ENCODE measurements at regions of chr9 and their contacts with region 1.

Region 1: DNA sequence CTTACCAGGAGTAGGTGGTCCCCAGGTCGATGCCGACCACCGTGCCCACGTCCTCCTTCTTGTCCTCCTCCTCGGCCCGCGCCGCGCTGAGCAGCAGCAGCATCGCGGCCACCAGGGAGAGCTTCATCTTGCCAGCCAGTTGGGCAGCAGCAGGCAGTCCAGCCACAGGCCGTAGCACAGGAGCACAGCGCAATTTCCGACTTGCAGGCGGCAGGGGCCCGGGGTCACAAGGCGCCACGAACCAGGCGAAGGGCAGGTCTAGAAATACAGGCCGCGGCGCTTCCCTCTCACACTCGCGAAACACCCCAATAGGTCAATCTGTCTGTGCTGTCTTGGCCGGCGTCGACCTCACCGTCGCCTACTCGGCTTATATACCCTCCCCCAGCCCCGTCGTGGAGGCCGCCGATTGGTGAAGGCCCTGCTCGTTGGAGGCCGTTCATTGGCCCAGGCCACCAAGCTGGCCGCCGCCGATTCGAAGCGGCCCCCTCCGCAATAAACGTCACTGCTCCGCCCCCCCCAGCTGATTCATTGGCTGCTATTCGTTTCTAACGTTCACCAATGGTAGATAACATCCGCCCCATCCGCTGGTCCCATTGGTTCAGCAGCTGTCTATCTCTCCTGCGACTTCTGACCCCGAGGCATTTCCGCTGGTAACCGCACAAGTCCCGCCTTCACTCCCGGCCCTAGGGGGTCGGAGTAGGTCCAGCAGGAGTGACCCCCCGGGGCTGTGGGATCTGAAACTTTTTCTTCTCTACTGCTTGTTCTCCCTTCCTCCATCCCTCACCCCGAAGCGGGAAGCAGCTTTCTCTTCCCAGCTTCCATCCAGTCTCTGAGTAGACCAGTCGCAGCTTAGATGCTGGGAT is at the start of gene HSPA5:
- H3K4me3 ChIP-seq: peak within 1 kb of the TSS; percentile 66
- H3K27ac ChIP-seq: peak within 1 kb of the TSS; percentile 81
- H3K4me1 ChIP-seq: no peaks in the 10 kb centered on the region
- CTCF ChIP-seq: peak; percentile 74; the same call in 1 of the 2 replicates

Region 2: GRCh38 chr9:124771021-124771866 is 470.0 kb before region 1 on chr9 and contains the start of gene NR6A1:
- CTCF ChIA-PET with region 1: no interaction called
- POLR2A ChIA-PET with region 1: interaction called, 11 read pairs
- H3K4me3 ChIP-seq: peak within 1 kb of the TSS; percentile 96
- H3K27ac ChIP-seq: peak within 1 kb of the TSS; percentile 91
- H3K4me1 ChIP-seq: peaks cover 16% of the 10 kb centered on the region; the same call in 1 of the 2 replicates
- CTCF ChIP-seq: peak; percentile 51; the same call in 1 of the 2 replicates

Region 3: DNA sequence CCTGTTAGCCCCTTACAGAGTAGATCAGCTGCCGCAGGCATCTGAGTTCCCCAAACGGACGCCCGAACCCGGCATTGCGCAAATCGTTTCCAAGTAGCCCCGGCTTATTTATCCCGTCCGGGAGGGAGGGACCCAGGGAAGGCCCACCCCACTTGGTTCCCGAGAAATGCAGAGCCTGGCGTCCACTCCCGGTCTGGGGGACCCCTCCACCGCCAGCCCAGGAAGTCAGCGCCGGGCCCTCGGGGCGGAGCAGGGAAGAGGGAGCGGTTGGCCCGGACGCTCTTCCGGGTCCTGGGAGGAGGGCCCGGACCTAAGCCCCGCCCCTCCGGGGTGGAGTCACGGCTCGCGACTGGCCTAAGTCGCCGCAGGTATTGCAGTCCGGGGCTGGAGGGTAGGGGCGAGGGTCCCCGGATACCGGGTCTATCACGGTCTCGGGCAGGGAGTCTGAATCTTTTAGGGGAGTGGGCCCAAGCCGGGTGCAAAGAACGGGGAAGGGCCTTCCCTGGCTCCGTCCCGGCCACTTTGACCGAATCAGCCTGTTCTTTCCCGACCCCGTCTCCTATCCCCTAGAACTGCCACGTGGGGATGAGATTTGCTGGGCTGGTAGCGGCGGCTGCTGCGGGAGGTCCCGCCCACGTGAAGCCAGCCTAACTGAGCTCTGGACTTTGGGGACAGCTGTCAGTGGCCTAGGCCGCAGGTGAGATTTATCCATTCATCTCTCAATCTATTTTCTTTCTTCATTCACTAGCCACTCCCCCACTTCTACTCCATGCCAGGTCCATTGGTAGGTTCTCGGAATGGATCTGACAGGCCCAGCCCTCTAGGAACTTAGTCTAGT is 40.8 kb before region 1 on chr9 and contains the start of gene RABEPK:
- CTCF ChIA-PET with region 1: no interaction called
- POLR2A ChIA-PET with region 1: interaction called, 38 read pairs
- H3K4me3 ChIP-seq: peak within 1 kb of the TSS; percentile 86
- H3K27ac ChIP-seq: peak within 1 kb of the TSS; percentile 44; the same call in 1 of the 2 replicates
- H3K4me1 ChIP-seq: 0 out of 2 replicates have a peak, but pooled peaks cover 3% of the 10 kb centered on the region
- CTCF ChIP-seq: no peak

Region 4: DNA sequence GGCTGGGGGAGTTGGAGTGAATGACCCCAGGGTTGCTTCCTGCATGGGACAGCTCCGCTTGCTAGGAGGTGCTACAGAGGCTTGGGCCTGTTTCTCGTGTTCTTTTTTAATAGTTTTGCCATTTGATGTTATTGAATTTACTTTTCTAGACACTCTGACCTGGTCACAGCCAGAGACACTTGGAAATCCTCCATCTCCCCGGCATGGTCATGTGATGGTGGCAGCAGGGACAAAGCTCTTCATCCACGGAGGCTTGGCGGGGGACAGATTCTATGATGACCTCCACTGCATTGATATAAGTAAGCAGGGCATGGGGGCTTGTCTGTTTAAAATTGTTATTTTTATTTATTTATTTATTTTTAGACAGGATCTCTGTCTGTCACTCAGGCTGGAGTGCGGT is 13.5 kb before region 1 on chr9:
- CTCF ChIA-PET with region 1: interaction called, 4 read pairs
- POLR2A ChIA-PET with region 1: interaction called, 40 read pairs
- H3K4me3 ChIP-seq: no peak overlapping the region
- H3K27ac ChIP-seq: no peak overlapping the region
- H3K4me1 ChIP-seq: no peaks in the 10 kb centered on the region
- CTCF ChIP-seq: no peak

Region 5: DNA sequence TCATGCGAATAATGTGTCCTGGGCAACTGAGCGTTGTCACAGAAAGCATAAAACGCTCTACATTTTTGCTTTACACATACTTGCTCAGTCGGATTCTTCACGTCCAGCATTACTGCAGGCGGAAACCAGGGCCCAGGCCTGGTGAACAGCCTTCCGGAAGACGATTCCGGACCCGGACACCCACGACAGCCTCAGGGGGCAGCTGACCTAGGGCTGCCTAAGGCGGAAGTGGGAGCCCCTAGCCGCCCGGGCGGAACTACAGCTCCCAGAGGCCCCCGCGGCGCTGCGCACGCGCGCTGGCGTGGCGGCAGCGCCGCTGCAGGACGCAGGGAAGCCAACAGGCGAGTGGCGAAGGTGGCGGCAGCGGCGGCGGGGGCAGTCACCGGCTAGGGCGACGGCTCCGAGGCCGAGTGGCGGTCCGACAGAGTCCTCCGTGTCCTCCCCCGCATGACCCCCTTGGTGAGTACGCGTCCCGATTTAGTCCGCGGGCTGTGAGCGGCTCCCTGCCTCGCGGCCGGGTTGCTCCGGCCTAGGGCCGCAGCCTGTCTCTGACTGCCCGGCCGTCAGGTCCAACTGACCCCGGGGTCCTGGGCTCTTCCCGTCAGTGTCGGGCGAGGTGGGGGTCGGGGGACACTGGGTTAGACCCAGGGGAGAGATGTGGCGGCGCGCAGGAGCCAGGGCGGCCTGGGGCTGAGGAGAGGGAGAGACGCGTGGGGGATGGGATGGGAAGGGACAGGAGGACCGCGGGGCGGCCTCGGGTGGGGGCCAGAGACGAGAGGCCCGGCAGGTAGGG is 20.5 kb after region 1 on chr9 and contains the start of gene GAPVD1:
- CTCF ChIA-PET with region 1: interaction called, 14 read pairs
- POLR2A ChIA-PET with region 1: interaction called, 60 read pairs
- H3K4me3 ChIP-seq: peak within 1 kb of the TSS; percentile 99
- H3K27ac ChIP-seq: peak within 1 kb of the TSS; percentile 80
- H3K4me1 ChIP-seq: no peaks in the 10 kb centered on the region
- CTCF ChIP-seq: peak; percentile 72

Region 6: GRCh38 chr9:125361837-125362531 is 120.8 kb after region 1 on chr9:
- CTCF ChIA-PET with region 1: no interaction called
- POLR2A ChIA-PET with region 1: interaction called, 16 read pairs
- H3K4me3 ChIP-seq: no peak overlapping the region
- H3K27ac ChIP-seq: no peak overlapping the region
- H3K4me1 ChIP-seq: no peaks in the 10 kb centered on the region
- CTCF ChIP-seq: no peak

Measured in HEK293 (cell line).